MCF 10A (cell line): ENCODE measurements at regions of chr16 and their contacts with region 1.

Region 1: GRCh38 chr16:3129137-3130131 is 5.4 kb upstream of the ZNF213 start:
- DNase-seq: peak; percentile 90
- H3K4me3 Mint-ChIP-seq: peak overlapping the region; percentile 80
- H3K27ac Mint-ChIP-seq: peak overlapping the region; percentile 51
- H3K4me1 Mint-ChIP-seq: peaks cover 21% of the 10 kb centered on the region
- H3K27me3 Mint-ChIP-seq: no peaks in the 10 kb centered on the region
- CTCF ChIP-seq: peak; percentile 89

Region 2: DNA sequence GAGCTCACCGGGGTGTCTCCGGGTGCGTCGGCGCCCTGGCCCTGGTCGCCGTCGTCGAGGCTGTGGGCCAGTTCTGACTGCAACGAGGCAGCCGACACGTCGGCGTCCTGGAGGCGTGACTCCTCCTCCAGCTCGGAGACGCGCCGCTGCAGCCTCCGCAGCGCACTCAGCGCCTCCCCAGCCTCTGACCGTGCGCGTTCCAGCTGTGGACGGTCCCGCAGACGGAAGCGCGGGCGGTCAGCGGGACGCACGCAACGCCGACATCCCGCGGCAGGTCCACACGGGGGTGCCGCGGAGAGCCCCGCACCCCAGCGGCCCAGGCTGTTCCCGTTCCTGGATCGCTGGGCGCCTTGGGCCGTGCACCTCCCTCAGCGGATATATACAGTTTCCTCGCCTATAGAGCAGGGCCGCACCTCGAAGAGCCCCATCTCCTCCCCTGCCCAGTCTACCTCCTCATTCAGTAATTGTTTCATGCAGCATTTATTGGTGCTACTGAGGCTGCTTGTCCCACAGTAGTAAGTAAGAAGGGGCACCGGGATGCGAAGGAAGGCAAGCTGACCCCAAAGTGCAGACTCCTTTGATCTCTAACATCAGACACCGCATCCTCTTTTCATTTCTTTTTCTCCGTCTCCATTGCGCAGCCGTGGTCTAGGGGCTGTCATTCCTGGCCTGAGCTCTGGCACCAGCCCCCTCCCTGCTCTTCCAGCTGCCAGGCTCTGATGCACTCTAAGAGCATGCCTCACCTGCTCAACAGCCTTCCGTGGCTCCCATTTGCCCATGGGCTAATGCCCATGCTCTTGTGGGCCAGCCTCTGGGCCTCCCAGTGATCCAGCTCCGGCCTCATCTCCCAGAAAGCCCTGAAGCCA is 99.7 kb before region 1 on chr16:
- CTCF ChIA-PET with region 1: interaction called, 22 read pairs
- POLR2A ChIA-PET with region 1: interaction called, 11 read pairs
- intact Hi-C with region 1: no loop called
- DNase-seq: no peak
- H3K4me3 Mint-ChIP-seq: no peak overlapping the region
- H3K27ac Mint-ChIP-seq: no peak overlapping the region
- H3K4me1 Mint-ChIP-seq: no peaks in the 10 kb centered on the region
- H3K27me3 Mint-ChIP-seq: peaks cover 27% of the 10 kb centered on the region
- CTCF ChIP-seq: no peak

Region 3: GRCh38 chr16:3059000-3059722 is 70.3 kb before region 1 on chr16:
- CTCF ChIA-PET with region 1: interaction called, 48 read pairs
- POLR2A ChIA-PET with region 1: interaction called, 47 read pairs
- intact Hi-C with region 1: loop called (anchors 1 kb)
- DNase-seq: peak; percentile 84
- H3K4me3 Mint-ChIP-seq: peak overlapping the region; percentile 78
- H3K27ac Mint-ChIP-seq: peak overlapping the region; percentile 74
- H3K4me1 Mint-ChIP-seq: no peaks in the 10 kb centered on the region
- H3K27me3 Mint-ChIP-seq: no peaks in the 10 kb centered on the region
- CTCF ChIP-seq: peak; percentile 90

Region 4: DNA sequence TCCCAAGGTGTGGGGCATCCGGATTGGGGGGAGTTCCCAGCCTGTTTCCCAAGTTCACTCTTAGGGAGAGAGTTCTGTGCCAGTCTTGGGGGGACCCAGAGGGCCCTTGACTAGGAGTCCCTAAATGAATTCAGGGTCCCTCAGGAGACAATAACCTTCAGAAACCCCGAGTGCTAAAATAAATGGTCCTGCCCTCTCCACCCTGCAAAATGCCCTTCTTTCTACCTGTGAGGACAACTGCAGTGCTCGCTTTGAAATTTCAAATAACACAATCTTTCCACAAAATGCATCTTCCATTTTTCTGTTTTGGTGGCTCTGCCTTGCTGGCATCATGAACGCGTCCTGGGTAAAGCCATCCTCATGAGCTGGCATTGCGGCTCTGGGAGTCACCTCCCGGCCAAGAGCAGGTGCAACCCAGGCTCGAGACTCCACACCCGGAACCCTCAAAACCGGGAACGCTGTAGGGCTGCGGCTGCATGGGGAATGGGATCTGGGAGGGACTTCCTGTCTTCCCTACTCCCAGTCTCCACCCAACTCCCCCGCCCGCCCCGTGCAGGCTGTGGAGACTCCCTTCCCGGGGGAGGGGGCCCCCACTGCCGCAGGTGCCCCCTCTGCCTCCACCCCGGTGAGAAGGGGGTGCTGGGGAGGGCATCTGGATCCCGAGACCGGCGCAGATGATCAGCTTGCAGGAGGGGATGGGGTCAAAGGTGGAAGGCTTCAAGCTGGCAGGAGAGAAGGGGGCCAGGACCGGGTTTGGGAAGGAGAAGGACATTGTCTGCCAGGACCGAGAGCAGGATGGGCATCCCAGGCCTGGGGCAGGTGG is 17.2 kb before region 1 on chr16 and contains the start of gene ZNF205:
- CTCF ChIA-PET with region 1: interaction called, 34 read pairs
- POLR2A ChIA-PET with region 1: interaction called, 33 read pairs
- intact Hi-C with region 1: no loop called
- DNase-seq: peak; percentile 79
- H3K4me3 Mint-ChIP-seq: peak within 1 kb of the TSS; percentile 85
- H3K27ac Mint-ChIP-seq: peak within 1 kb of the TSS; percentile 29
- H3K4me1 Mint-ChIP-seq: peaks cover 13% of the 10 kb centered on the region
- H3K27me3 Mint-ChIP-seq: no peaks in the 10 kb centered on the region
- CTCF ChIP-seq: no peak
- total RNA-seq, gene ZNF205: 11.8 and 12.1 TPM in 2 replicates

Region 5: DNA sequence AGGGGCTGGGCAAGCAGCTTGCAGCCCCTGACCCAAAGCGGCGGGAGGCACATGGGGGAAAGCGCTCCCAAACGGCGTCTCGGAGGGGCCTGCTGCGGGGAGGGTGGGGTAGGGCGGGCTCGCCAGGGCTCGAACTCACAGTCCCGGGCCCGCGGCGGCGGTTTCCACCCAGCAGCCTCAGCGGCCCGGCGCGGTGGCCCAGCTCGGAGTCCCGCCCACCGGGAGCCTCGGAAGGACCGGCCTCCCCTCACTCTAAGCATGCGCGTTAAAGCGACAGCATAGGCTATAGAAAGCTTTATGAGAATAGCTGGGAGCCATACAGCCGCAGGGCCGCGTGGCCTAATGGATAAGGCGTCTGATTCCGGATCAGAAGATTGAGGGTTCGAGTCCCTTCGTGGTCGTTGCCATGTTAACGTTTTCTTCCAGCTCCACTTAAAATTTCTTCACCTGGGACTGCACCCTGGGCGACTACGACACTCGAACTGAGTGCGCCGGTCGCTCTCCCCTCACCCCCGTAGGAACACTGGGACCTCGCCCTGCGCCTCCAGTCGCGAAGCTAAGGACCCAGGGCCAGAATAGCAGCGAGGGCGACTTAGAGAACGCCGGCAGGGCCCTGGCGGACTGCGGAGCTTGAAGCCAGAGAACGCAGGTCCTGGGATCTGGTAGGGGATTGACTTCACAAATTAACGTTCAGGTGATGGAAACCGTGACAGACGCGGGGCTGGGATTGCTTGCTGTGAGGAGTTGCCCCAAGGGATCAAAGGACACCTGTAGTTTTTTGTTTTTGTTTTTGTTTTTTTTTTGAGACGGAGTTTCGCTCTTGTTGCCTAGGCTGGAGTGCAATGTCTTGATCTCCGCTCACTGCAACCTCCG is 21.1 kb after region 1 on chr16:
- CTCF ChIA-PET with region 1: interaction called, 75 read pairs
- POLR2A ChIA-PET with region 1: interaction called, 105 read pairs
- intact Hi-C with region 1: loop called (anchors 1 kb)
- DNase-seq: peak; percentile 98
- H3K4me3 Mint-ChIP-seq: peak overlapping the region; percentile 83
- H3K27ac Mint-ChIP-seq: peak overlapping the region; percentile 87
- H3K4me1 Mint-ChIP-seq: peaks cover 10% of the 10 kb centered on the region
- H3K27me3 Mint-ChIP-seq: no peaks in the 10 kb centered on the region
- CTCF ChIP-seq: no peak

Region 6: GRCh38 chr16:3165111-3165822 is 35.8 kb after region 1 on chr16:
- CTCF ChIA-PET with region 1: interaction called, 18 read pairs
- POLR2A ChIA-PET with region 1: interaction called, 9 read pairs
- intact Hi-C with region 1: loop called (anchors 1 kb)
- DNase-seq: no peak
- H3K4me3 Mint-ChIP-seq: no peak overlapping the region
- H3K27ac Mint-ChIP-seq: no peak overlapping the region
- H3K4me1 Mint-ChIP-seq: no peaks in the 10 kb centered on the region
- H3K27me3 Mint-ChIP-seq: no peaks in the 10 kb centered on the region
- CTCF ChIP-seq: no peak

Region 7: DNA sequence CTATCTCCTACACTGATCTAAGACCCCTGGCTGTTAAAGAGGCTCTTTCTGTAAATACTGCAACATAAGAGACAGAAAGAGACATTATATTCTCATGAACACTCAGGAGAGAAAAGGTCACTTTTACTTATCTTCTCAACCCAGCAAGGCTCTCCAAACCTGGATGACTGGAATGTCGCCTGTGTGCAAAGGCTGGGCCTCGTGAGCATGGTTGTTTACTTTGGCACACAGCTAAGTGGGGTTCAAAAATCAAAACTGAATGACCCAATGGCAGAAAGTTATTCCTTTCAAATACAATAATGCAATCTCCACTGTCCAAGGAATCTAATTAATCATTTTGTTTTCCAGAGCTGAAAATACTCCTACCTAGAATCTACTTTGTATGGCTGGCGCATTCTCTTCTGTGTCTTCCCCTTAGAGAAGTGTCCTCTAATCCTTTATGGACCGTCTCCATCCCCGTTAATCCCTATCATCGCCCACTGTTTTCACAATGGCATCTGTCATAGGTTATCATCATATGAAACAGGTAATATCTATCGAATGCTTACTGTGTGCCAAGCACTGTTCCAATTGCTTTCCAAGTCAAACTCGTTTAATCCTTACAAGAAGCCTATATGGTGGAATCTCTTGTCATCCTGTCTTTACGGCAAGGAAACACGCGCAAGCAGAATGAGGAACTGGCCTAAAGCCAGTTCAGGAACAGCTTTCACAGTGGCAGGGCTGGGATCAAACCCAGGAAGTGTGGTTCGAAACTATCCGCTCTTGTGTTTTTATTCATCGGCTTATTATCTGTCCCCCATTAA is 480.7 kb after region 1 on chr16:
- CTCF ChIA-PET with region 1: no interaction called
- POLR2A ChIA-PET with region 1: no interaction called
- intact Hi-C with region 1: no loop called
- DNase-seq: no peak
- H3K4me3 Mint-ChIP-seq: peak overlapping the region; percentile 100
- H3K27ac Mint-ChIP-seq: no peak overlapping the region
- H3K4me1 Mint-ChIP-seq: peaks cover 26% of the 10 kb centered on the region
- H3K27me3 Mint-ChIP-seq: no peaks in the 10 kb centered on the region
- CTCF ChIP-seq: no peak